K562 (cell line): ENCODE measurements at regions of chr6 and their contacts with region 1.

Region 1: GRCh38 chr6:44338228-44339122 is 4.0 kb upstream of the SPATS1 start:
- DNase-seq: peak; percentile 78 to 86 (median 80)
- ATAC-seq: peak; percentile 91
- H3K4me3 ChIP-seq: no peak overlapping the region
- H3K27ac ChIP-seq: no peak overlapping the region
- H3K4me1 ChIP-seq: peaks cover 5 to 11% of the 10 kb centered on the region in 2 experiments; a peak in 3 of 5 replicates
- H3K27me3 ChIP-seq: peaks cover 25 to 37% of the 10 kb centered on the region in 2 experiments
- CTCF ChIP-seq: peak; percentile 87 to 96 (median 88)
- EP300 ChIP-seq: no peak
- POLR2A ChIP-seq: no peak
- RAD21 ChIP-seq: peak; percentile 90 to 97

Region 2: DNA sequence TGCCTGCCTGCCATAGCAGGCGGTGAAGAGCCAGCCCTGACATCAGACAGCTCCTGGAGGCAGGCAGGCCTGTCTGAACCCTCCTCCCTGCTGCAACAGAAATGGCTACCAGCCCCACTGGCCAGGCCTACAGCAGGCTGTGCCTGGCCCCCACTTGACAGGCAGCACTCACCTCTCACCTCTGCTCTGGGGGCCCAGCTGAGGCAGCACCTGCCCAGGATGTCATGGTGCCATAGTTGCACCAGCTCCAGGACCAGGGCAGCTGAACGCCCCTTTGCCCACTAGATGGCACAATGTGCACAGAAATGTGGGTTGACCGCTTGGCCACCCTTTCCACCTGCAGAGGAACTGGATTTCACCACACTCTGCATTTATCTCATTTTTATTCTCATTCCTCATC is 241.9 kb before region 1 on chr6:
- CTCF ChIA-PET with region 1: interaction called, 7 read pairs
- POLR2A ChIA-PET with region 1: no interaction called
- in situ Hi-C with region 1: no loop called
- intact Hi-C with region 1: loop called (anchors 10 kb)
- DNase-seq: peak; percentile 56 to 73 (median 64)
- ATAC-seq: peak; percentile 84
- H3K4me3 ChIP-seq: no peak overlapping the region
- H3K27ac ChIP-seq: no peak overlapping the region
- H3K4me1 ChIP-seq: peaks cover 0 to 4% of the 10 kb centered on the region in 2 experiments; a peak in 3 of 5 replicates
- H3K27me3 ChIP-seq: no peaks in the 10 kb centered on the region
- CTCF ChIP-seq: peak; percentile 81 to 82 (median 81)
- EP300 ChIP-seq: no peak
- POLR2A ChIP-seq: no peak
- RAD21 ChIP-seq: peak; percentile 64 to 75

Region 3: GRCh38 chr6:44151348-44152108 is 186.9 kb before region 1 on chr6:
- CTCF ChIA-PET with region 1: interaction called, 11 read pairs
- POLR2A ChIA-PET with region 1: no interaction called
- in situ Hi-C with region 1: no loop called
- intact Hi-C with region 1: no loop called
- DNase-seq: peak; percentile 88 to 95 (median 90)
- ATAC-seq: peak; percentile 96
- H3K4me3 ChIP-seq: no peak overlapping the region
- H3K27ac ChIP-seq: no peak overlapping the region
- H3K4me1 ChIP-seq: peaks cover 0 to 21% of the 10 kb centered on the region in 2 experiments; a peak in 3 of 5 replicates
- H3K27me3 ChIP-seq: no peaks in the 10 kb centered on the region
- CTCF ChIP-seq: peak; percentile 100
- EP300 ChIP-seq: no peak
- POLR2A ChIP-seq: no peak
- RAD21 ChIP-seq: peak; percentile 88 to 97

Region 4: GRCh38 chr6:44172731-44173500 is 165.6 kb before region 1 on chr6:
- CTCF ChIA-PET with region 1: interaction called, 4 read pairs
- POLR2A ChIA-PET with region 1: no interaction called
- in situ Hi-C with region 1: no loop called
- intact Hi-C with region 1: loop called (anchors 1 kb)
- DNase-seq: peak; percentile 90 to 94 (median 92)
- ATAC-seq: peak; percentile 98
- H3K4me3 ChIP-seq: no peak overlapping the region
- H3K27ac ChIP-seq: no peak overlapping the region
- H3K4me1 ChIP-seq: peaks cover 2 to 25% of the 10 kb centered on the region in 2 experiments; a peak in 3 of 5 replicates
- H3K27me3 ChIP-seq: peaks cover 2 to 21% of the 10 kb centered on the region in 2 experiments; a peak in 2 of 5 replicates
- CTCF ChIP-seq: peak; percentile 96 to 99 (median 98)
- EP300 ChIP-seq: no peak; the same call in 1 of the 2 replicates
- POLR2A ChIP-seq: no peak
- RAD21 ChIP-seq: peak; percentile 97 to 99

Region 5: DNA sequence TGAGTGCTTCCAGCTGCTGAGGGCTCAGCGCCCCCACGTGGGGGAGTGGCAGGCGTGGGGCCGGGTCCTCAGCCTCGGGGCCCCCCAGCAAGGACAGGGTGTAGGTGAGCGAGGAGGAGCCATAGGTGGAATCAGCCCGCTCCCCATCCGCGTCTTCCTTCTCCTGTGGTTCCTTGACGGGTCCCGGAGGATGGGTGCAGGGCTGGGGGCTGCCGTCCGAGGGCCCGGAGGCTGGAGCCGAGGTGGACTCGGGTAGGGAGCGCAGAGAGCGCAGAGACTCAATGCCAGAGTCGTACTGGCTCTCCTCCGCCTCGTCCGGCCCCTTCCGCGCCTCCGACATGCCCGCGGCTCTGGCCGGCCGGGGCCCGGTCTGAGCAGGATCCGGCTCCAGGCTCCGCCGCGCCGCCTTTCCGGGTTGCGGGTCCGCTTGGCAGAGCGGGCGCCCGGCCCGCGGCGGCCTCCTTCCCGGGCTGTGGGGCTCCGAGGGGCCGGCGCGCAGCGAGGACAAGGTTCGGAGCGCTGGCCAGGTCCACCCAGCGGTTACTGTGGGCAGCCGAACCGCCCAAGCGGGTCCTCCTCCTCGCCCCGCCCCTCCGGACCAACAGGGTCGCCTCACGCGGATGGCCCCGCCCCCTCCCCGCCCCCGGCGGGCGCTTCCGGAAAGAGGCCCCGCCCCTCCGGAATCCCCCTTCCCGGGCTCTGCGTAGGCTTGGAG is 73.3 kb before region 1 on chr6 and contains the start of gene NFKBIE:
- CTCF ChIA-PET with region 1: interaction called, 61 read pairs
- POLR2A ChIA-PET with region 1: interaction called, 8 read pairs
- in situ Hi-C with region 1: loop called (anchors 5 kb)
- intact Hi-C with region 1: loop called (anchors 1 kb)
- DNase-seq: peak; percentile 95 to 99 (median 99)
- ATAC-seq: peak; percentile 84
- H3K4me3 ChIP-seq: peak within 1 kb of the TSS; percentile 83
- H3K27ac ChIP-seq: peak within 1 kb of the TSS; percentile 74
- H3K4me1 ChIP-seq: peaks cover 19 to 31% of the 10 kb centered on the region in 2 experiments; a peak in 4 of 5 replicates
- H3K27me3 ChIP-seq: peaks cover 16 to 17% of the 10 kb centered on the region in 2 experiments
- CTCF ChIP-seq: peak; percentile 62 to 74 (median 65)
- EP300 ChIP-seq: no peak
- POLR2A ChIP-seq: peak; percentile 70
- RAD21 ChIP-seq: peak; percentile 23 to 75; a peak in 2 of 4 replicates
- polyA plus RNA-seq, gene NFKBIE: 2.1 to 2.9 TPM

Region 6: DNA sequence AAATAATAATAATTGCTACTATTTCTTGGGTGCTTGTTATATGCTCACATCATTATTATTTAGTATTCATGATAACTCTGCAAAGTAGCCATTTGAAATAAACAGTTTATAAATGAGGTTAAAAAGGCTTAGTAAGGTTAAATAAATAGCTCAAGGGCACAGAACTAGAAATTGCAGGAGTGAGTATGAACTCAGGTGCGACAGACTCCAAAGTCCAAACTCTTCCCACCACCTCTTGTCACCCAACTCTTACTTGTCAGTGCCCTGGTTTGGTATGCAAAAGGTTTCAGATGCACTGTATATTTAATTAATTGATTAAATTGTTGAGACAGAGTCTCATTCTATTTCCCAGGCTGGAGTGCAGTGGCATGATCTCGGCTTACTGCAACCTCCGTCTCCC is 28.3 kb after region 1 on chr6:
- CTCF ChIA-PET with region 1: interaction called, 11 read pairs
- POLR2A ChIA-PET with region 1: interaction called, 5 read pairs
- in situ Hi-C with region 1: no loop called
- intact Hi-C with region 1: no loop called
- DNase-seq: no peak
- ATAC-seq: no peak
- H3K4me3 ChIP-seq: no peak overlapping the region
- H3K27ac ChIP-seq: no peak overlapping the region
- H3K4me1 ChIP-seq: no peaks in the 10 kb centered on the region
- H3K27me3 ChIP-seq: peaks cover 18 to 21% of the 10 kb centered on the region in 2 experiments; a peak in 4 of 5 replicates
- CTCF ChIP-seq: no peak
- EP300 ChIP-seq: no peak
- POLR2A ChIP-seq: no peak
- RAD21 ChIP-seq: no peak

Region 7: DNA sequence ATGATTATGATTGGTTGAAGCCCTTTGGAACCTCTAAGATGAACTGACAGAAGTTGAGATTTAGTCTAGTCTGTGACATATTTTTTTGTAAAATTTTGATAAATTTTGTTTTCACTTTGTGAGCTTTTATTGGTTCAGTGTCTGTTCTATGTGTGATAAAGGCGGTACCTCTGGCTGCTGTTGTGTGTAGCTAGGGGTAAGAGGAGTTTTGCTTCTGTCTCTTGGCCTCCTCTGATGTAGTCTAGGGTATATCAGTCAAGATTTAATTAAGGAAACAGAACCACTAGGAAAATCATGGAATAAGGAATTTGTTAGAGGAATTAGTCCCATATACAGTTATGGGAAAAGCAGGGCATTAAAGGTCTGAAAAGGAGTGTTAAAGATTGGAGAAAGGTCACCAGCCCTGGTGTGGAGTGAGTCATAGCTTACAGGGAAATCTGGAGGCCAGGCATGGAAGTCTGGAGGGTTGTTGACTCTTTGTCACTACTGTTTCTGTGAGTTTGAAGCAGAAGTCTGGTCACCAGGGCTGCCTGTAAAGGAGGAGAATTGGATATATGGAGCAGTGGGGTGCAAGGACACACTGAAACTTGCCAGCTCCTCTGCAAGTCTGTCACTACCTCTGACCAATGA is 77.5 kb after region 1 on chr6:
- CTCF ChIA-PET with region 1: no interaction called
- POLR2A ChIA-PET with region 1: no interaction called
- in situ Hi-C with region 1: no loop called
- intact Hi-C with region 1: no loop called
- DNase-seq: peak in 1 of 4 experiments; percentile 25
- ATAC-seq: no peak; the same call in 1 of the 3 replicates
- H3K4me3 ChIP-seq: no peak overlapping the region
- H3K27ac ChIP-seq: peak overlapping the region; percentile 21; the same call in 1 of the 3 replicates
- H3K4me1 ChIP-seq: no peaks in the 10 kb centered on the region; a peak in 1 of 5 replicates
- H3K27me3 ChIP-seq: no peaks in the 10 kb centered on the region
- CTCF ChIP-seq: no peak
- EP300 ChIP-seq: no peak
- POLR2A ChIP-seq: no peak
- RAD21 ChIP-seq: no peak

Region 8: GRCh38 chr6:44456070-44456965 is 117.8 kb after region 1 on chr6:
- CTCF ChIA-PET with region 1: no interaction called
- POLR2A ChIA-PET with region 1: no interaction called
- in situ Hi-C with region 1: no loop called
- intact Hi-C with region 1: loop called (anchors 5 kb)
- DNase-seq: peak; percentile 82 to 86 (median 84)
- ATAC-seq: peak; percentile 91
- H3K4me3 ChIP-seq: peak overlapping the region; percentile 17
- H3K27ac ChIP-seq: peak overlapping the region; percentile 26; the same call in 1 of the 3 replicates
- H3K4me1 ChIP-seq: peaks cover 8 to 18% of the 10 kb centered on the region in 2 experiments; a peak in 4 of 5 replicates
- H3K27me3 ChIP-seq: peaks cover 0 to 3% of the 10 kb centered on the region in 2 experiments; a peak in 1 of 5 replicates
- CTCF ChIP-seq: peak; percentile 88 to 96 (median 91)
- EP300 ChIP-seq: no peak
- POLR2A ChIP-seq: no peak
- RAD21 ChIP-seq: peak; percentile 78 to 86

Region 9: DNA sequence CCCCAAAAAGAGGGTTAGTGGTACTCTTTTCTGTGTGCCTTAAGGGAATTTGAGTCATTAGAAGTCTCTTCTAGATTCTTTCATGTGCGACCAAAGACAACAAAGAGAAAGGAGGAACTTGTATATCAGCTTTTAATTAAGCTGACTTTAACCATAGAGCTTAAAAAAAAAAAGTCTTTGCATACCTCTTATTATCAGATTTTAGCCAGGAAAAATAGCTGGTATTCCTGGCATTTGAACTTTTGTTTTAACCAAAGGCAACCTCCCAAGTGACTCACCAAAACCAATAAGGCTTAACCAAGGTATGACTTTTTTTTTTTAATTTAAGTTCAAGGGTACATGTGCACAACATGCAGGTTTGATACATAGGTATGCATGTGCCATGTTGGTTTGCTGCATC is 424.0 kb after region 1 on chr6:
- CTCF ChIA-PET with region 1: no interaction called
- POLR2A ChIA-PET with region 1: no interaction called
- in situ Hi-C with region 1: no loop called
- intact Hi-C with region 1: no loop called
- DNase-seq: no peak
- ATAC-seq: no peak
- H3K4me3 ChIP-seq: no peak overlapping the region
- H3K27ac ChIP-seq: no peak overlapping the region
- H3K4me1 ChIP-seq: no peaks in the 10 kb centered on the region
- H3K27me3 ChIP-seq: no peaks in the 10 kb centered on the region
- CTCF ChIP-seq: no peak
- EP300 ChIP-seq: no peak
- POLR2A ChIP-seq: no peak
- RAD21 ChIP-seq: no peak